Caco-2 (cell line): ENCODE measurements at regions of chr3 and their contacts with region 1.

Region 1: GRCh38 chr3:30693470-30694120 is 87.2 kb downstream of the TGFBR2 start:
- DNase-seq: peak in 1 of 2 experiments; percentile 65
- H3K4me3 ChIP-seq: no peak overlapping the region
- H3K4me3 Mint-ChIP-seq: no peak overlapping the region
- H3K27ac Mint-ChIP-seq: no peak overlapping the region
- H3K4me1 ChIP-seq: peaks cover 31% of the 10 kb centered on the region
- H3K4me1 Mint-ChIP-seq: peaks cover 40% of the 10 kb centered on the region
- H3K27me3 ChIP-seq: no peaks in the 10 kb centered on the region
- H3K27me3 Mint-ChIP-seq: no peaks in the 10 kb centered on the region
- CTCF ChIP-seq: peak; percentile 77 to 79

Region 2: GRCh38 chr3:30042274-30042859 is 651.2 kb before region 1 on chr3:
- CTCF ChIA-PET with region 1: interaction called, 5 read pairs
- POLR2A ChIA-PET with region 1: no interaction called
- intact Hi-C with region 1: loop called (anchors 1 kb)
- DNase-seq: peak; percentile 69 to 72
- H3K4me3 ChIP-seq: no peak overlapping the region
- H3K4me3 Mint-ChIP-seq: no peak overlapping the region
- H3K27ac Mint-ChIP-seq: no peak overlapping the region
- H3K4me1 ChIP-seq: peaks cover 10% of the 10 kb centered on the region; the same call in 1 of the 2 replicates
- H3K4me1 Mint-ChIP-seq: no peaks in the 10 kb centered on the region
- H3K27me3 ChIP-seq: no peaks in the 10 kb centered on the region
- H3K27me3 Mint-ChIP-seq: no peaks in the 10 kb centered on the region
- CTCF ChIP-seq: peak; percentile 76 to 86

Region 3: DNA sequence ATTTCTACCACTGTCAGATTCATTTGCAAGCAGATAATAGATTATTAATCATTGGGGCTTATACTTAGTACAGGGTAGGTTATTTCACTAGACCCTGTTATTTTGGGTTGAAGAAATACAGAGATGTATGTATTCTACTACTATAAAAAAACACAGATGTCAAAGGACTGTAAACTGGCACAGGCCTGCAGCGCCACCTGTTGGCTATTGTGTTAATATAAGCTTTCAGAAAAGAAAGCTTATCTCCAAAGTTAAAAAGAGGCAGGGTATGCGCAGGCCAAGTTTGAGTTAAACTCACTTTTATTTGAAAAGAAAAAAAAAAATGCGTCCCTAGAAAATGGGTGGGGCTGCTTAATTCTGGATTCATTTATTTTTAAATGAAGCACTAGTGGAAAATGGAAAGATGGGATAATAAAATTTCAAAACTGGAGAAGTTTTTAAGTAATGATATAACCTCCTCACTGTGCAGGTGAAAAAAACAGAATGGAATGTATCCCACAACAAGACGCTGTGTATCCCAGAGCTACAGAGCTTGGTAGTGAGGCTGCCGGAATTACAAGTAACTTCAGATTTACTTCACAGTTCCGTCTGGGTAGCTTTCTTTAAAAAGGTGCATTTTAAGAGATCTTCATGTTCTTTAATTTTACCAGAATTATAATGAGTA is 494.4 kb before region 1 on chr3:
- CTCF ChIA-PET with region 1: interaction called, 5 read pairs
- POLR2A ChIA-PET with region 1: no interaction called
- intact Hi-C with region 1: loop called (anchors 1 kb)
- DNase-seq: peak; percentile 59 to 72
- H3K4me3 ChIP-seq: no peak overlapping the region
- H3K4me3 Mint-ChIP-seq: no peak overlapping the region
- H3K27ac Mint-ChIP-seq: no peak overlapping the region
- H3K4me1 ChIP-seq: peaks cover 34% of the 10 kb centered on the region
- H3K4me1 Mint-ChIP-seq: peaks cover 19% of the 10 kb centered on the region
- H3K27me3 ChIP-seq: no peaks in the 10 kb centered on the region
- H3K27me3 Mint-ChIP-seq: no peaks in the 10 kb centered on the region
- CTCF ChIP-seq: peak; percentile 68 to 72

Region 4: GRCh38 chr3:30437171-30437601 is 256.4 kb before region 1 on chr3:
- CTCF ChIA-PET with region 1: no interaction called
- POLR2A ChIA-PET with region 1: no interaction called
- intact Hi-C with region 1: loop called (anchors 5 kb)
- DNase-seq: no peak
- H3K4me3 ChIP-seq: no peak overlapping the region
- H3K4me3 Mint-ChIP-seq: no peak overlapping the region
- H3K27ac Mint-ChIP-seq: no peak overlapping the region
- H3K4me1 ChIP-seq: peaks cover 16% of the 10 kb centered on the region
- H3K4me1 Mint-ChIP-seq: peaks cover 21% of the 10 kb centered on the region
- H3K27me3 ChIP-seq: no peaks in the 10 kb centered on the region
- H3K27me3 Mint-ChIP-seq: no peaks in the 10 kb centered on the region
- CTCF ChIP-seq: no peak

Region 5: GRCh38 chr3:30606301-30607031 is 87.1 kb before region 1 on chr3 and contains the start of gene TGFBR2:
- CTCF ChIA-PET with region 1: no interaction called
- POLR2A ChIA-PET with region 1: no interaction called
- intact Hi-C with region 1: loop called (anchors 5 kb)
- DNase-seq: peak; percentile 94 to 98
- H3K4me3 ChIP-seq: peak within 1 kb of the TSS; percentile 68
- H3K4me3 Mint-ChIP-seq: peak within 1 kb of the TSS; percentile 90
- H3K27ac Mint-ChIP-seq: peak within 1 kb of the TSS; percentile 83
- H3K4me1 ChIP-seq: peaks cover 58% of the 10 kb centered on the region
- H3K4me1 Mint-ChIP-seq: peaks cover 34% of the 10 kb centered on the region
- H3K27me3 ChIP-seq: no peaks in the 10 kb centered on the region
- H3K27me3 Mint-ChIP-seq: no peaks in the 10 kb centered on the region
- CTCF ChIP-seq: peak in 1 of 2 experiments; percentile 11
- total RNA-seq, gene TGFBR2: 40.5 and 41.9 TPM in 2 replicates

Region 6: DNA sequence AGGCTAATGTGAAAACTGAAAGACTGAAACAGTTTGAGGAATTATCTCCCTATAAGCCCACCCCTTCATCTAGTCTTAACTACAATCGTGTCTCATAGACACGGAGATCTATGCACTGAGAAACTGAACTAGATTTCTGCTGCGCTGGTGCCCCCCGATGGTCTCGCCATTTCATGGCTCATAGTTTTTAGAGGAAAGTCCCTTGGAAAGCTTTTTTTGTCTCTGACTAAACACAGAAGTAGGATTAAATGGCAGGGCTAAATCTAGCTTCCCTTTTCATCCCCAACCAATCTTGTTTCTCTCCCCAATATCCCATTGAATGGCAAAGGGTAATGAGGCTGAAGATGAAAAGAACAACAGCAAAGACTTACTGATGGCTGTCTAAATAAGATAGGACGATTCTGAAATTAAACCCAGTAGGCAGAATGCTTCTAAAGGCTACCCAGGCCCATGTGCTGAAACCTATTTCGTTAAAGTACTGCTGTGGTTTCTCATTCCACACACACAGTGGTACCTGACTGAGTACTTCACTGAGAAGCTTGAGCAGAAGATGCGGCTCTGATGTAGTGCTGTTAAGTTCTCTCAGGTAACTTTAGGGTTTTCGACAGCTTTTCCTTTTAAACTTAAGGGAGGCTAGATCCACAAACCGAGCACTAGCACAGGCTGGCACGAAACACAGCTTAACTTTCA is 58.2 kb after region 1 on chr3:
- CTCF ChIA-PET with region 1: interaction called, 7 read pairs
- POLR2A ChIA-PET with region 1: no interaction called
- intact Hi-C with region 1: loop called (anchors 1 kb)
- DNase-seq: peak; percentile 51 to 58
- H3K4me3 ChIP-seq: no peak overlapping the region
- H3K4me3 Mint-ChIP-seq: no peak overlapping the region
- H3K27ac Mint-ChIP-seq: no peak overlapping the region
- H3K4me1 ChIP-seq: peaks cover 17% of the 10 kb centered on the region
- H3K4me1 Mint-ChIP-seq: peaks cover 15% of the 10 kb centered on the region
- H3K27me3 ChIP-seq: no peaks in the 10 kb centered on the region
- H3K27me3 Mint-ChIP-seq: no peaks in the 10 kb centered on the region
- CTCF ChIP-seq: peak; percentile 36 to 43

Region 7: GRCh38 chr3:30847592-30847991 is 154.0 kb after region 1 on chr3:
- CTCF ChIA-PET with region 1: no interaction called
- POLR2A ChIA-PET with region 1: no interaction called
- intact Hi-C with region 1: no loop called
- DNase-seq: no peak
- H3K4me3 ChIP-seq: no peak overlapping the region
- H3K4me3 Mint-ChIP-seq: no peak overlapping the region
- H3K27ac Mint-ChIP-seq: no peak overlapping the region
- H3K4me1 ChIP-seq: no peaks in the 10 kb centered on the region
- H3K4me1 Mint-ChIP-seq: no peaks in the 10 kb centered on the region
- H3K27me3 ChIP-seq: no peaks in the 10 kb centered on the region
- H3K27me3 Mint-ChIP-seq: no peaks in the 10 kb centered on the region
- CTCF ChIP-seq: no peak

Region 8: GRCh38 chr3:30864836-30865235 is 171.2 kb after region 1 on chr3:
- CTCF ChIA-PET with region 1: no interaction called
- POLR2A ChIA-PET with region 1: no interaction called
- intact Hi-C with region 1: no loop called
- DNase-seq: no peak
- H3K4me3 ChIP-seq: no peak overlapping the region
- H3K4me3 Mint-ChIP-seq: no peak overlapping the region
- H3K27ac Mint-ChIP-seq: no peak overlapping the region
- H3K4me1 ChIP-seq: 0 out of 2 replicates have a peak, but pooled peaks cover 3% of the 10 kb centered on the region
- H3K4me1 Mint-ChIP-seq: no peaks in the 10 kb centered on the region
- H3K27me3 ChIP-seq: no peaks in the 10 kb centered on the region
- H3K27me3 Mint-ChIP-seq: no peaks in the 10 kb centered on the region
- CTCF ChIP-seq: no peak